Naive thymus-derived CD4-positive, alpha-beta T cell (primary cell): ENCODE measurements at regions of chr15 and their contacts with region 1.

Region 1: GRCh38 chr15:71730277-71731144 is 79.8 kb upstream of the NR2E3 start:
- DNase-seq: peak in 3 of 9 donors; percentile 8 to 29 (median 15)
- ATAC-seq: peak; percentile 50
- H3K4me3 ChIP-seq: no peak overlapping the region
- H3K4me3 Mint-ChIP-seq: no peak overlapping the region
- H3K27ac ChIP-seq: no peak overlapping the region
- H3K27ac Mint-ChIP-seq: no peak overlapping the region
- H3K4me1 ChIP-seq: no peaks in the 10 kb centered on the region
- H3K4me1 Mint-ChIP-seq: peaks cover 0 to 4% (median 0%) of the 10 kb centered on the region in 7 donors
- H3K27me3 ChIP-seq: peaks cover 2 to 3% of the 10 kb centered on the region in 2 donors
- H3K27me3 Mint-ChIP-seq: peaks cover 2 to 18% (median 15%) of the 10 kb centered on the region in 5 donors

Region 2: GRCh38 chr15:71386448-71387236 is 343.9 kb before region 1 on chr15:
- CTCF ChIA-PET with region 1: interaction called, 3 read pairs
- POLR2A ChIA-PET with region 1: no interaction called
- intact Hi-C with region 1: loop called in 1 of 2 experiments (anchors 5 kb)
- DNase-seq: peak in 3 of 9 donors; percentile 3 to 26 (median 17)
- ATAC-seq: no peak
- H3K4me3 ChIP-seq: no peak overlapping the region
- H3K4me3 Mint-ChIP-seq: peak overlapping the region in 1 of 10 donors; percentile 17
- H3K27ac ChIP-seq: no peak overlapping the region
- H3K27ac Mint-ChIP-seq: no peak overlapping the region
- H3K4me1 ChIP-seq: no peaks in the 10 kb centered on the region
- H3K4me1 Mint-ChIP-seq: peaks cover 0 to 13% (median 5%) of the 10 kb centered on the region in 7 donors
- H3K27me3 ChIP-seq: no peaks in the 10 kb centered on the region
- H3K27me3 Mint-ChIP-seq: peaks cover 6 to 38% (median 34%) of the 10 kb centered on the region in 5 donors

Region 3: DNA sequence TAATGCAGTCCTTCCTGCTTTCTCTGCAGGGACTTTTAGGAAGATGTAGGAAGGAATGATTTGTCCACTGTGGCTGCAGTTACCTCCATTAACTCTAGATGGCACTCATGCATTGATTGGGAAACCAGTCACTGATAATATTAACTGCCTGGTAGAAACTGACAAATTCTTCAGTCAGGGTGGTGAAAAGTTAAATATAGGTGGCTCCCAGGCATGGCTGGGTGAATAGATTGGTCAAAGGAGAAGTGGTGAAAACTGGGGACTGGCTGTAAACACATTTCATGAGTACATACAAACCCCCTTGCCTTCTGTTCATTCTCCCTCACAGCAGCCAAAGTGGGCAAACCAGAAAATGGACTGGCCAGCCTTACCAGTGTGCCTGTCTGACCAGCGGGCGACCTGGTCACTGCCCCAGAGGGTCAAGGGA is 281.8 kb before region 1 on chr15:
- CTCF ChIA-PET with region 1: no interaction called
- POLR2A ChIA-PET with region 1: no interaction called
- intact Hi-C with region 1: loop called in 1 of 2 experiments (anchors 5 kb)
- DNase-seq: no peak
- ATAC-seq: no peak
- H3K4me3 ChIP-seq: no peak overlapping the region
- H3K4me3 Mint-ChIP-seq: no peak overlapping the region
- H3K27ac ChIP-seq: no peak overlapping the region
- H3K27ac Mint-ChIP-seq: no peak overlapping the region
- H3K4me1 ChIP-seq: no peaks in the 10 kb centered on the region
- H3K4me1 Mint-ChIP-seq: no peaks in the 10 kb centered on the region
- H3K27me3 ChIP-seq: no peaks in the 10 kb centered on the region
- H3K27me3 Mint-ChIP-seq: peaks cover 0 to 20% (median 0%) of the 10 kb centered on the region in 5 donors

Region 4: DNA sequence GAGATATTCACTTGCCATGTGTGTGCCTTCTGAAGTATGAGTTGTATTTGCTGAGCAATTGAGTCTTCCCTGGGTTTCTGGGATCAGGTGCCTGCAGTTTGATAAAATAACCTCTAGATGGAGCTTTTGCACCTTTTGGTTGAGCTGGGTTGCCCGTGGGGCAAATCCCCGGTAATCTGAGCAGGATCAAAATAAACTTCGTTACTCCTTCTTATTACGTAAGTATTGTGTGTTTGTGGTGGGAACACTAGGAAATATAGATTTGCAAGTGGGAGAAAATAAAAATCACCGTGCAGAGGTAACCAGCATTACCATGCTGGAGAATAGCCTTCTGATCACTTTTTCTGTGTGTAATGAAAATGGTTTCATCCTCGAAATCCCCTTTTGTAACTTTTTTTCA is 197.5 kb before region 1 on chr15:
- CTCF ChIA-PET with region 1: no interaction called
- POLR2A ChIA-PET with region 1: no interaction called
- intact Hi-C with region 1: loop called in 1 of 2 experiments (anchors 10 kb)
- DNase-seq: no peak
- ATAC-seq: no peak
- H3K4me3 ChIP-seq: no peak overlapping the region
- H3K4me3 Mint-ChIP-seq: no peak overlapping the region
- H3K27ac ChIP-seq: no peak overlapping the region
- H3K27ac Mint-ChIP-seq: no peak overlapping the region
- H3K4me1 ChIP-seq: no peaks in the 10 kb centered on the region
- H3K4me1 Mint-ChIP-seq: no peaks in the 10 kb centered on the region
- H3K27me3 ChIP-seq: no peaks in the 10 kb centered on the region
- H3K27me3 Mint-ChIP-seq: peaks cover 17 to 36% (median 29%) of the 10 kb centered on the region in 5 donors

Region 5: GRCh38 chr15:71634820-71635560 is 95.5 kb before region 1 on chr15:
- CTCF ChIA-PET with region 1: no interaction called
- POLR2A ChIA-PET with region 1: no interaction called
- intact Hi-C with region 1: no loop called
- DNase-seq: no peak
- ATAC-seq: no peak
- H3K4me3 ChIP-seq: no peak overlapping the region
- H3K4me3 Mint-ChIP-seq: no peak overlapping the region
- H3K27ac ChIP-seq: no peak overlapping the region
- H3K27ac Mint-ChIP-seq: no peak overlapping the region
- H3K4me1 ChIP-seq: no peaks in the 10 kb centered on the region
- H3K4me1 Mint-ChIP-seq: no peaks in the 10 kb centered on the region
- H3K27me3 ChIP-seq: no peaks in the 10 kb centered on the region
- H3K27me3 Mint-ChIP-seq: peaks cover 12 to 30% (median 26%) of the 10 kb centered on the region in 5 donors